IMR-90 (cell line): ENCODE measurements at regions of chr5 and their contacts with region 1.

Region 1: GRCh38 chr5:127564002-127564769 is 46.7 kb downstream of the PRRC1 start:
- DNase-seq: peak; percentile 53
- ATAC-seq: peak; percentile 48
- H3K4me3 ChIP-seq: no peak overlapping the region
- H3K27ac ChIP-seq: no peak overlapping the region
- H3K4me1 ChIP-seq: peaks cover 10% of the 10 kb centered on the region
- H3K27me3 ChIP-seq: peaks cover 4% of the 10 kb centered on the region; the same call in 1 of the 2 replicates
- CTCF ChIP-seq: peak; percentile 66
- POLR2A ChIP-seq: no peak
- RAD21 ChIP-seq: peak; percentile 76

Region 2: DNA sequence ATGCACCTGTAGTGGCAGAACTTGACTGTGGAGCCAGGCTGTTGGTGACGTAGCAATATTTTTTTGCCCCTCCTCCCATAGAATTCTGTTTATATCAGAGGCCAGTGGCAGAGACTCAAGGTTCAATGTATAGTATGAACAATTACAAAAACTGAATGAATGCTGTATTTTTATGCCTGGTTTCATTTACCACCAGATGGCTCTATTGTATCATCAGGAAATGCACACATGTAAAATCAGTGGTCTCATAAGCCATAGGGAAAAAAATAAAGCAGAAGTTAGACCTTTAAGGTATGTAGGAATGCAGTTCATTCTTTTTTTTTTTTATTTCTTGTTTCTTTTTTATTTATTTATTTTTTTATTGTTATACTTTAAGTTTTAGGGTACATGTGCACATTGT is 182.6 kb after region 1 on chr5:
- CTCF ChIA-PET with region 1: no interaction called
- POLR2A ChIA-PET with region 1: no interaction called
- dilution Hi-C with region 1: no loop called
- in situ Hi-C with region 1: no loop called
- intact Hi-C with region 1: loop called (anchors 2 kb)
- DNase-seq: peak; percentile 55
- ATAC-seq: peak; percentile 40; the same call in 1 of the 2 replicates
- H3K4me3 ChIP-seq: no peak overlapping the region
- H3K27ac ChIP-seq: no peak overlapping the region
- H3K4me1 ChIP-seq: no peaks in the 10 kb centered on the region
- H3K27me3 ChIP-seq: peaks cover 8% of the 10 kb centered on the region
- CTCF ChIP-seq: peak; percentile 77
- POLR2A ChIP-seq: no peak
- RAD21 ChIP-seq: peak; percentile 84

Region 3: DNA sequence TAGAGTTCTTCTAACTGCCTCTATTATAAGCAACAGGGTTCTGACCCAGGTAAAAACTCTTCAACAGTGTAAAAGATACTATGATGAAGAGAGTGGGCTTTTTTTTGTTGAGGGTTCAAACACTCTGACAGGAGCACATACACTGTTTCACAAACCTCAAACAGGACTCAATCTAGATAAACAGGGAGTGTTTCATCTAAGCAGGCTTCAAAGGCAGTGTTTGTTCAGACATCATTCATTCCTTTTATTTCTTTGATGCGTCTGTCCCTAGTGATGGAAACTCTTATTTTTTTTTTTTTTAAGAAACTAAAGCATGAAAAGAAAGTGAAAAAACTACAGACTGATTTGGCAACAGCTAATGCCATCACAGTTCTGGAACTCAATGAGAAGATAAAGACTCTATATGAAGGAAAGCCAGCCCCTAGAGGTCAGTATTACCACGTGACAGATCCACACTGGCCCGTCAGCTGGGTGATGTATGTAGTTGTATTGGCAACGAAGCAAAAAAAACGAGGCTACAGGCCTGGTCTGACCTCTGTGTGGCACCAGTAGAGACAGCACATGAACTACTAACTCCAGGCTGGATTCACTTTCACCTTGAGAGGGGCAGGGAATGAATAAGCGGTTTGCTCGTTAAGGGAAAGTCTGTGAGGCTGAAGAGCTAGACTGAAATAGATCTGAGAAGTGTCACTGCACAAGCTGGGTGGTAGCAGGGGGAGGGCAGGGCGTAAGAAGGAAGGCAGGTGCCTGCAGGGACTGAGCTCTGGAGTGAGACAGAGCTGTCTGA is 311.2 kb after region 1 on chr5:
- CTCF ChIA-PET with region 1: no interaction called
- POLR2A ChIA-PET with region 1: no interaction called
- dilution Hi-C with region 1: no loop called
- in situ Hi-C with region 1: loop called (anchors 25 kb)
- intact Hi-C with region 1: loop called (anchors 5 kb)
- DNase-seq: peak; percentile 52
- ATAC-seq: peak; percentile 71
- H3K4me3 ChIP-seq: no peak overlapping the region
- H3K27ac ChIP-seq: no peak overlapping the region
- H3K4me1 ChIP-seq: 0 out of 2 replicates have a peak, but pooled peaks cover 2% of the 10 kb centered on the region
- H3K27me3 ChIP-seq: no peaks in the 10 kb centered on the region
- CTCF ChIP-seq: peak; percentile 41
- POLR2A ChIP-seq: no peak
- RAD21 ChIP-seq: peak; percentile 51

Region 4: DNA sequence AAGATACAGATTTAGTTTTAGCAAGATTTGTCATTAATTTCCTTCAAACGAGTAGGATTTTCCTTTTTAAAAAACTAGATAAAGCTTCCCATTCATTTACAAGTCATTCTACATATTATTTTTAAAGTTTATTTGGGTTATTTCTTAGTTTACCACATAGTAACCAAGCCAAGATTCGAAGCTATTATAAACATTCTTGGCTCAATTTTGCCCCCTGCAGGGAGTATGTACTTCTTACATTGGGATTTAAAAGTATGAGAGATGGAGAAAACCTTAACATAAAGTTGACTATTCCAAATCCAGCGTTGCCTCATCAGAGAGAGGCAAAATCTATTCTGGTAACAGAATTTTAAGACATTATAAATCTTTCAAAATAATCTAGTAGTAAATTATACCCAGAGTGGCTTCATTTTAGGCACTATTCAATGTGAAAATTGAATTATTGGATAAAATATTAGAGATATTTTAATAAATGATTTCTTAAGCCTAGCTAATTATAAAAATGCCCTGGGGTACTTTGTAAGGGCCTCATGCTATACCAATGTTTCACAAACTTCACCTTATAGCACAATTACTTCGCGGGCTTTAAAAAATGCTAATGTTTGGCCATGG is 934.8 kb after region 1 on chr5:
- CTCF ChIA-PET with region 1: no interaction called
- POLR2A ChIA-PET with region 1: no interaction called
- dilution Hi-C with region 1: no loop called
- in situ Hi-C with region 1: loop called (anchors 25 kb)
- intact Hi-C with region 1: no loop called
- DNase-seq: peak; percentile 79
- ATAC-seq: peak; percentile 79
- H3K4me3 ChIP-seq: no peak overlapping the region
- H3K27ac ChIP-seq: no peak overlapping the region
- H3K4me1 ChIP-seq: peaks cover 4% of the 10 kb centered on the region
- H3K27me3 ChIP-seq: no peaks in the 10 kb centered on the region
- CTCF ChIP-seq: peak; percentile 69
- POLR2A ChIP-seq: no peak
- RAD21 ChIP-seq: peak; percentile 72